Tibial artery (tissue), 4 donors: ENCODE measurements at regions of chr10 and their contacts with region 1.

Region 1: GRCh38 chr10:79195091-79195923 is 126.5 kb downstream of the ZMIZ1 start:
- DNase-seq: peak; percentile 85 to 94
- H3K4me3 ChIP-seq: peak overlapping the region in 1 of 2 donors; percentile 13
- H3K27ac ChIP-seq: peak overlapping the region; percentile 54 to 72
- H3K4me1 ChIP-seq: peaks cover 0 to 31% (median 17%) of the 10 kb centered on the region in 4 donors
- H3K27me3 ChIP-seq: no peaks in the 10 kb centered on the region
- CTCF ChIP-seq: peak; percentile 95 to 97

Region 2: DNA sequence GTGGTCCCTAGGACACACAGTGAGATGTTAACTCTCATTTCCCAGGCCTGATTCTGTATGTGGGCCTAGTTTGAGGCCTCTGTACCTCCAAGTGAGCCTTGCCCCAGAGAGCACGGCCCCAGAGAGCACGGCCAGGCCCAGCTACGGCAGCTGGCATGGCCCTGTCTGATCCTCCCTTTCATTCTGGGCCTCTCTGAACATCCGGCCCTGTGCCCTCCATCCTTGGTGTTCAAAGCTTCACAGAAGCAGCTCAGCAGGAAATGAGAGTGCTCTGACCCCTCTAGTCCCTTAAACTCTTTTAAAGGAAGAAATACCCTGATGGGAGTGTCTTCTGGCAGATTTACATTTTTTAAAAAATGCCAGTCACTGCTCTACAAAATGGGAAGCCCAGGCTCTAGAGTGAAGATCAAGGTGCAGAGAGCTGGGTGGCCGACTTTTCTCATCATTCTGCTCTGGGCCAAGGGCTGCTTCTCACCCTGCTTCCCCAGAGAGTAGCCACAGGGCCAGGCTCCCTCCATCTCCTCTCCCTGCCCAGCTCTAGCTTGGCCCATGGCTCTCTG is 989.8 kb before region 1 on chr10:
- intact Hi-C with region 1: loop called (anchors 5 kb)
- DNase-seq: no peak
- H3K4me3 ChIP-seq: no peak overlapping the region
- H3K27ac ChIP-seq: peak overlapping the region; percentile 46 to 66
- H3K4me1 ChIP-seq: peaks cover 0 to 21% (median 13%) of the 10 kb centered on the region in 4 donors
- H3K27me3 ChIP-seq: no peaks in the 10 kb centered on the region
- CTCF ChIP-seq: no peak

Region 3: GRCh38 chr10:78432583-78432982 is 762.7 kb before region 1 on chr10:
- intact Hi-C with region 1: loop called (anchors 5 kb)
- DNase-seq: peak; percentile 75 to 77
- H3K4me3 ChIP-seq: no peak overlapping the region
- H3K27ac ChIP-seq: peak overlapping the region; percentile 2 to 43
- H3K4me1 ChIP-seq: peaks cover 0 to 30% (median 16%) of the 10 kb centered on the region in 4 donors
- H3K27me3 ChIP-seq: no peaks in the 10 kb centered on the region
- CTCF ChIP-seq: no peak

Region 4: GRCh38 chr10:78806681-78807221 is 388.6 kb before region 1 on chr10:
- intact Hi-C with region 1: no loop called
- DNase-seq: no peak
- H3K4me3 ChIP-seq: no peak overlapping the region
- H3K27ac ChIP-seq: peak overlapping the region in 1 of 2 donors; percentile 87
- H3K4me1 ChIP-seq: peaks cover 0 to 52% (median 30%) of the 10 kb centered on the region in 4 donors
- H3K27me3 ChIP-seq: no peaks in the 10 kb centered on the region
- CTCF ChIP-seq: no peak

Region 5: DNA sequence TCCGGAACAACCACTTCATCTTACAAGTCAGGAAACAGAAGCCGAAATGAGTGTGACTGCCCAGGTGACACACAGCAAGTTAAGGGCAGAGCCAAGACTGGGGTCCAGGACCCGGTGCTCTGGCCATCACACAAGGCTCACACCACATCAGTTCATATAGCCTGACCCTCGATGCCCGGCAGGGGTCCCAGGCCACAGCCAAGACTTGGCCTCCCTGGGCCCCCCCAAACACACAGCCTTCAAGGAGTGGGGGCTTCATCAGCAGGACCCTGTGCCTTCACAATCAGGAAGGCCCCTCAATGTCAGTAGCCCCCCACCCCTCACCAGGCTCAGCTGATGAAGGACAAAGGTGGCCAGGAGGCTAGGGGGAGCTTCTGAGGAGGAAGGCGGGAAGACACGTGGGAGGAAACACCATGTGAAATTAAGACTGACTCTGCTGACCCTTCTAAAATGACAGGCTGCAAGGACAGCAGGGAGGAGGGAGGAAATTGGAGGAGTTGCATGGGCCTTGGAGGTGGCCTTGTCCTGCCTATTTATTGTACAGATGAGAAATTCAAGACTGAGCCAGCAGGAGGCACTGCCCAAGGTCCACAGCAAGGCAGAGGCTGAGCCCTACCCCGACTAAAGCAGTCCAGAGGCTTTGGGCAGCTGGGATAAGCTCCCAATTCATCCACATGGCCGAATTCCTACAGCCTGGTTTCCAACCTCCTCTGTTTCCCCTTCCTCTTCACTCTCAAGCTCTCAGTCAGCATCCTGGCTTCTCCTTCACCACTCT is 342.7 kb before region 1 on chr10:
- intact Hi-C with region 1: loop called (anchors 10 kb)
- DNase-seq: no peak
- H3K4me3 ChIP-seq: no peak overlapping the region
- H3K27ac ChIP-seq: no peak overlapping the region
- H3K4me1 ChIP-seq: peaks cover 0 to 6% (median 3%) of the 10 kb centered on the region in 4 donors
- H3K27me3 ChIP-seq: no peaks in the 10 kb centered on the region
- CTCF ChIP-seq: no peak

Region 6: DNA sequence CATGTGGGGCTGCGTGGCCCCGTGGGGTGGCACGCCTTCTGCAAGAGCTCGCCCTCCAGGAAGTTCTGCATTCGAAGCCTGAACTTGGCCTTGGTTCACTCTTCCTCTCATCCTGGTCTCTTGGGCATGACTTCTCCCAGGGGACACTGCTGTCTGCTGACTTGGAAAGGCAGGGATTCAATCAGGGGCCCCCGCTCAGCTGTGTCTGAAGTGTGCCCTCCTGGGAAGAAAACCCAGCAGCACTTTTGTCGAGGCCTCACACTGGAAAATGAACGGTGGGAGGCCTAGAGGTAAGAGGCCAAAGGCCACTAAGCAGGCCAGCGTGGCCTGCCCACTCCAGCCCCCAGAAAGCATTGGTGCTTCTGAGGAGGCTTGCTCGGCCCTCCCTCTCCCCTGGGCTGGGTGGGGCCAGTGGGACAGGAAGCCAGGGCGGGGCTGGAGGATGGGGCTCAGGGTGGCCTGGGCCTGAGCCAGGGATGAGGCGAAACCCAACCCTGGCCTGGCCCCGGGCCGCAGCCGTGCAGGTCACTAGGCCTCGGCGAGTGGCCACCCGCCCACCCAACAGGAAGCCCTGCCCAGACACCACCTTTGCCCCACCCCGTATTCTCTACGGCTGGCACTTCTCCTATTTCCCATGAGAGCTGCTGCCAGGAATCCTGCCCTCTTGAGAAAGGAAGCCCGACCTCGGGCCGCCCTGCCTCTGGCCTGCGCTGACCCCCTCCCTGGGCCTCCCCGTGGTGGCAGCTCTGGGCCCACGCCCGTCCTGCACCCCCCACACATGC is 45.5 kb before region 1 on chr10:
- intact Hi-C with region 1: no loop called
- DNase-seq: peak; percentile 85 to 89
- H3K4me3 ChIP-seq: no peak overlapping the region
- H3K27ac ChIP-seq: peak overlapping the region; percentile 79 to 80
- H3K4me1 ChIP-seq: peaks cover 8 to 100% (median 93%) of the 10 kb centered on the region in 4 donors
- H3K27me3 ChIP-seq: no peaks in the 10 kb centered on the region
- CTCF ChIP-seq: no peak